PC-9 (cell line): ENCODE measurements at regions of chr9 and their contacts with region 1.

Region 1: DNA sequence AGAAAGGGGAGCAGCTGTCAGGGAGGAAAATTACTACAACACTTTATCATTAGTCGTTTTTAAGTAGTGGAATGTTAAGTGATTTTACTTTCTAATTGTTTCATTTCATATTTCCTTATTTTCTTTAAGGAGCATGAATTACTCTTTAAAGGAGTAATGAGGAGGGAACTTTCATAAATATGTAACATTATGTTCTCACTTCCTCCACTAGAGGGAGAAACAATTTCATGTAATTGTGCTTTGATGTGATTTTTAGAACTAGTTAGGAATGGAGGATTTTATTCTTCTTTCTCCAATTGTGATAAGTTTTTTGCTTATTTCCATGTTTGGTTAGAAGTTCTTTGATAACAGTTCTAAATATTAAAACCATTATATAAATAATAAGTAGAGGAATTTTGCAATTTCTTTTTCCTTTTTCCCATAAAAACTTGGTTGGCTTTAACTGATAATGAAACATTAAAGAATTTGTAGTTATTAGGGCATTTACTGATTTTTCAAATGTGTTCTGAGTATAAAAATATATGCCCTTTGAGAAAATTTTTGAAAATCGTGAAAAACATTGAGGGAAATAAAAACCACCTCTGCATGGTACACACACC is 25.6 kb downstream of the CEP78 start:
- DNase-seq: no peak
- H3K4me3 ChIP-seq: no peak overlapping the region
- H3K27ac ChIP-seq: no peak overlapping the region
- H3K4me1 ChIP-seq: no peaks in the 10 kb centered on the region
- H3K27me3 ChIP-seq: no peaks in the 10 kb centered on the region
- CTCF ChIP-seq: peak; percentile 82

Region 2: GRCh38 chr9:78235756-78236538 is 25.6 kb before region 1 on chr9 and contains the start of gene CEP78:
- CTCF ChIA-PET with region 1: interaction called, 10 read pairs
- POLR2A ChIA-PET with region 1: no interaction called
- intact Hi-C with region 1: no loop called
- DNase-seq: peak; percentile 90 to 94
- H3K4me3 ChIP-seq: peak within 1 kb of the TSS; percentile 94
- H3K27ac ChIP-seq: peak within 1 kb of the TSS; percentile 56
- H3K4me1 ChIP-seq: peaks cover 7% of the 10 kb centered on the region
- H3K27me3 ChIP-seq: no peaks in the 10 kb centered on the region
- CTCF ChIP-seq: no peak
- total RNA-seq, gene CEP78: 37.8 and 38.3 TPM in 2 replicates

Region 3: DNA sequence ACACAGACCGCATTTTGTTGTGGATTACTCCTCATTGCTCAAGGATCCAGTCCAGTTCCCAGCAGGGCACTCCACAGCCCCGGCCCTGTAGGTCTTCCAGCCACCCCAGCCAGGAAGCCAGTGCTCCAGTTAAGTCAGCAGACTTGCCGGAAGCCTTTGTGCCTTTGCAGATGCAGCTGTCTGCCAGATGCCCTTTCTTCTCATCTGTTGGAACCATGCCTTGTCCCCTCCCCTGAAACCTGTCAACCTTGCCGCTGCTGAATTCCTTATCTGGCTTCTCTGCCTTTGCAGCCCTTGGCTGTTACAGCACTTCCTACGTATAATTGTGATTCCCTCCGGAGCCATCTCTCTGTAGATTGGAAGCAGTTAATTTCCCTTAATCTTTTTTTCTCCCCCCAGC is 63.8 kb after region 1 on chr9:
- CTCF ChIA-PET with region 1: no interaction called
- POLR2A ChIA-PET with region 1: no interaction called
- intact Hi-C with region 1: loop called (anchors 10 kb)
- DNase-seq: no peak
- H3K4me3 ChIP-seq: no peak overlapping the region
- H3K27ac ChIP-seq: no peak overlapping the region
- H3K4me1 ChIP-seq: no peaks in the 10 kb centered on the region
- H3K27me3 ChIP-seq: no peaks in the 10 kb centered on the region
- CTCF ChIP-seq: no peak

Region 4: DNA sequence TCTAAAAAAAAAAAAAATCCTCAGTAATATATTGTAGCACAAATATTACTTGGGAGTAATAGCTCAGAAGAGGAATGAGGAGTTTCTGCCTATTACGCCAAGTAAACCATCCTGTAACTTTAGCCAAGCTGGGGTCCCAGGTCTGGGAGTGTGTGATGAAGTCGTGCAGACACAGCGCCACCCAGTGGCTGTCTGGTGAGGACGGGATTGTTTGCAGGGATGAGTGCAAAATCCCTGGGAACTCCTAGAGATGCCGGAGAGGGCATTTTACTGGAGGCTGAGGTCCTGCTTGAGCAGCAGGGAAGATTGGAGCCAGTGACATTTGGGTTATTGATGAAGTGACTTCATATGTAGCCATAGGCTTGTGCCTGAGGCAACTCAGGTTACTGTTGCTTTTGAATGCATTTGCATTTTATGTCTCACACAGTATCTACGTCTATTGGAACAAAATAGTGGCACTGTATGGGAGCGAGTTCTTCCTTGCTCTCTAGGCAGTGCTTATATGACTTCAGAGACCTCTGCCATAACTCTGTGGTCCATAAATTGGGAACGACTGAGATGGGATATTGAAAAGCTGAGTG is 108.2 kb after region 1 on chr9:
- CTCF ChIA-PET with region 1: no interaction called
- POLR2A ChIA-PET with region 1: no interaction called
- intact Hi-C with region 1: loop called (anchors 5 kb)
- DNase-seq: peak in 1 of 2 experiments; percentile 49
- H3K4me3 ChIP-seq: no peak overlapping the region
- H3K27ac ChIP-seq: no peak overlapping the region
- H3K4me1 ChIP-seq: no peaks in the 10 kb centered on the region
- H3K27me3 ChIP-seq: peaks cover 16% of the 10 kb centered on the region; the same call in 1 of the 2 replicates
- CTCF ChIP-seq: peak; percentile 87